ENCODE measurements at regions of chr6 and their contacts with region 1.

Region 1: GRCh38 chr6:2196079-2196679 is 49.2 kb downstream of the GMDS start:
- H3K4me3 Mint-ChIP-seq: no peak overlapping the region
- H3K27ac Mint-ChIP-seq: no peak overlapping the region
- H3K4me1 Mint-ChIP-seq: peaks cover 21% of the 10 kb centered on the region
- H3K27me3 Mint-ChIP-seq: peaks cover 1% of the 10 kb centered on the region

Region 2: GRCh38 chr6:1604158-1605030 is 591.8 kb before region 1 on chr6:
- intact Hi-C with region 1: loop called (anchors 2 kb)
- H3K4me3 Mint-ChIP-seq: peak overlapping the region; percentile 44
- H3K27ac Mint-ChIP-seq: no peak overlapping the region
- H3K4me1 Mint-ChIP-seq: peaks cover 39% of the 10 kb centered on the region
- H3K27me3 Mint-ChIP-seq: peaks cover 92% of the 10 kb centered on the region

Region 3: DNA sequence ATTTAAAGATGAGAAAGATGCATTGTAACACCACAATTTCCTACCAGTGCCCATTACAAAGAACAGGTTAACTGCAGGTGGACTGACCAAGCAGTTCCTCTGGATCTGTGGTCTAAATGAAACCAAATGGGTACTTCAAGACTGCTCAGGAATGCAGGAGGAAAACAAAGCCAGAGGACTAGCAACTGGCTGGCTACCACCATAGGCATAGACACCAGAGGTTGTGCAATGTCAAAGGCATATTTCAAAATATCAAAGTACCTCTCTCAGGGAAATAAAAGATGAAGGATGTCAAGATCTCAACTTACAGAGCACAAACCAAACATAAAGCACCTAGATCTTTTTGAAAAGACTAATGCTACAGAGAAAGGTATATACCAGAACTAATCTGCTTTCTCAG is 16.2 kb before region 1 on chr6:
- intact Hi-C with region 1: no loop called
- H3K4me3 Mint-ChIP-seq: no peak overlapping the region
- H3K27ac Mint-ChIP-seq: no peak overlapping the region
- H3K4me1 Mint-ChIP-seq: no peaks in the 10 kb centered on the region
- H3K27me3 Mint-ChIP-seq: no peaks in the 10 kb centered on the region